ENCODE measurements at regions of chr21 and their contacts with region 1.

Region 1: GRCh38 chr21:41283211-41283818 is 33.3 kb upstream of the FAM3B start:
- DNase-seq: peak; percentile 87
- H3K4me3 Mint-ChIP-seq: no peak overlapping the region
- H3K27ac Mint-ChIP-seq: no peak overlapping the region
- H3K4me1 Mint-ChIP-seq: no peaks in the 10 kb centered on the region
- H3K27me3 Mint-ChIP-seq: peaks cover 34% of the 10 kb centered on the region

Region 2: DNA sequence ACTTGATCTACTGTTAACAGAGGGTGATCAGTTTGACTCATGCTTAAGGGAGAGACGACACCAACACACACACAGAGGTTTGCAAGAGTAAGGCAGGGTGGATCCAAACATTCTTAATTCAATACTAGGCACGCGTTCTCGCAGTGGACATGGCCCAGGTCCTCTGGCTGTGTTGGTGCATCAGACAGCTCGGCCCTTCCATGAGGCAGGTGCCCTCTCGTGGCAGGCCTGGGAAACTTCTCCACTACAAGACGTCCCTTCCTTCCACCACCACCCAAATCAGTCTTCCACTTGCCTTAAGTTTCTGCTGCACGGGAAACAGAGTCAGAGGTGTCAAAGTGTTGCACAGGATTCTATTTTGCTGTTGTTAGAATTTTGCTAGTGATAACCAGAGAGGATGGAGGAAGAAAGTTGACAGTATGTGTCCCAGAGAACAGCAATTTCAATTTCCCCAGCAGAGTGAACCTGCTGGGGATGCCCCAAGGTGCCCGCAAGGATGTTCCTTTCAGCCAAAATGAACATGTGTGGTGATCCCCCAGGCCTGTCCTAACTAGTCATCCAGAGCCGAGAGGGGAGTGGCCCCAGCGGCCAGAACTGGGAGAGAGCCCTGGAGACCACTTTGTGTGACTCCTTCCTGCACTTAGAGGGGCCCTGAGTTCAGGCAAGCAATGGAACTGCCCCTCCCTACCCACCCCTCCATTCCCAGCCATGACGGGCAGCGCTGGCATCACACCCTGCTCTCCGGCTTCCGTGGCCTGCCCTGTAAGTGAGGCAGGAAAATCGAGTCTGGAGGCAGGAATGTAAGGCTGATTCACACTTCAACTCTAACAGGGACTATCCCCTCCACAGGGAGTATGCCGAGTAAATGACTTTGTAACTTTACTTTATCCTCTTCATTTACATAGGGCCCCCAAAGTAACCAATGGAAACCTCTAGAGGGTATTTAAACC is 177.5 kb after region 1 on chr21:
- intact Hi-C with region 1: loop called (anchors 1 kb)
- DNase-seq: peak; percentile 83
- H3K4me3 Mint-ChIP-seq: no peak overlapping the region
- H3K27ac Mint-ChIP-seq: no peak overlapping the region
- H3K4me1 Mint-ChIP-seq: peaks cover 5% of the 10 kb centered on the region
- H3K27me3 Mint-ChIP-seq: no peaks in the 10 kb centered on the region

Region 3: DNA sequence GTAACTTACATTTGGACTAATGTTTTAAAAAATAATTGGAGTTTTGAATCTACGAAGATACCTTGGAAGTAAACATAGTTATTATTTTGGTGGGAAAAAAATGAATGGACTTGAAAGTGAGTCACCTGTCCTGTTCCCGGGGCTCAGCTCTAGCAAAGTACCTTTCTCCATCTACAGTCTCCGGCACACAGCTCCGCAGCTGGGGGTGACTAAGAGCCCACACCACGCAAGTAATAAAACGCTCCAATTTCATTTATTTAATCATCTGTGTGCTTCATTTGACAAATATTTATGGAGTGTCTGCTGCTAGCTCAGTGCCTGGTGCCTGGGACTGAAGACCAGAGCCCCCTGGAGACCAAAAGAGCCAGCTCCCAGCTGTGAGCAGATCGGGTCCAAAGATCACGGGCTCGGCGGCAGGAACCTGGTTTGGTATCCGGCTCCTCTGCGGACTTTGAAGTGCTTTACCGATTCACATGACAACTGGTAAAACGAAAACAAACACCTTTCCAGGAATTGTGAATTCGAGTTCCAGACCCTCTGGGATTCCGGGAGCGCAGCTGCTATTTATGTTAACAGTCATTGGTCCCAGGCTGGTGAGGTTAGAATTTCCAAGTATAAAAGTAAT is 485.2 kb after region 1 on chr21:
- intact Hi-C with region 1: loop called (anchors 10 kb)
- DNase-seq: peak; percentile 76
- H3K4me3 Mint-ChIP-seq: peak overlapping the region; percentile 83
- H3K27ac Mint-ChIP-seq: no peak overlapping the region
- H3K4me1 Mint-ChIP-seq: peaks cover 20% of the 10 kb centered on the region
- H3K27me3 Mint-ChIP-seq: peaks cover 73% of the 10 kb centered on the region

Region 4: GRCh38 chr21:41816220-41817165 is 533.2 kb after region 1 on chr21:
- intact Hi-C with region 1: loop called (anchors 2 kb)
- DNase-seq: peak; percentile 85
- H3K4me3 Mint-ChIP-seq: no peak overlapping the region
- H3K27ac Mint-ChIP-seq: peak overlapping the region; percentile 48
- H3K4me1 Mint-ChIP-seq: peaks cover 5% of the 10 kb centered on the region
- H3K27me3 Mint-ChIP-seq: no peaks in the 10 kb centered on the region

Region 5: DNA sequence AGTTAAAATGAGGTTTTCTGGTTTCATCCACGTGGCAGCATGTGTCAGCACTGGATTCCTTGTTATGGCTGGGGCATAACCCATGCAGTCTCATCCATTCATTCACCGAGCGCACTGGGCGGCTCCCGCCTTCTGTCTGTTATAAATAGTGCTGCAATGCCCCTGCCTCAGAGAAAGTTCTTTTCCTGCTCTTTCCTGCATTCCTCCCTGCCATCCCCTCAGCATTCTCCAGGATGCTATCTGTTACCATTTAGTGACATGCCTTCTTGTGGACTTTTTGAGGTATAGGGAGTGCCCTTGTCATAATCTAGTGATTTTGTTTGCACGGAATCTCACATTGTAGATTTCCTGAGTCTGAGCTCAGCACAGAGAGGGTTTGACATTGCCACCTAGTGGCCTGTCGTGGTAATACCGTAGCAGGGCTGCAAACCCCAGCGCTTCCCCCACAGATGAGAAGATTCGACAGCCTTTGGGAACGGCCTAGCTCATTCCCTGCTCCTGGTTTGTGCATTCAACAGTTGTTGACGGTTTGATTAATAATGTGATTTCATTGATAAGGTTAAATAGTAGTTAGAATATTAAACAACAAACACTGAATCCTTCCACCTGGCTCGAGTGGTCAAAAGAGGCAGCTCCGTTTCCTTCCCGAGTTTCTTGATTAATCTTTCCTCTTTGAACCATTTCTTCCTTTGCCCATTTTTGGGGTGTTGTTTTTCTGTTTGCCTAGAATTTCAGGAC is 834.1 kb after region 1 on chr21:
- intact Hi-C with region 1: loop called (anchors 10 kb)
- DNase-seq: peak; percentile 92
- H3K4me3 Mint-ChIP-seq: no peak overlapping the region
- H3K27ac Mint-ChIP-seq: no peak overlapping the region
- H3K4me1 Mint-ChIP-seq: peaks cover 21% of the 10 kb centered on the region
- H3K27me3 Mint-ChIP-seq: peaks cover 53% of the 10 kb centered on the region